ENCODE measurements at regions of chr17 and their contacts with region 1.

Region 1: DNA sequence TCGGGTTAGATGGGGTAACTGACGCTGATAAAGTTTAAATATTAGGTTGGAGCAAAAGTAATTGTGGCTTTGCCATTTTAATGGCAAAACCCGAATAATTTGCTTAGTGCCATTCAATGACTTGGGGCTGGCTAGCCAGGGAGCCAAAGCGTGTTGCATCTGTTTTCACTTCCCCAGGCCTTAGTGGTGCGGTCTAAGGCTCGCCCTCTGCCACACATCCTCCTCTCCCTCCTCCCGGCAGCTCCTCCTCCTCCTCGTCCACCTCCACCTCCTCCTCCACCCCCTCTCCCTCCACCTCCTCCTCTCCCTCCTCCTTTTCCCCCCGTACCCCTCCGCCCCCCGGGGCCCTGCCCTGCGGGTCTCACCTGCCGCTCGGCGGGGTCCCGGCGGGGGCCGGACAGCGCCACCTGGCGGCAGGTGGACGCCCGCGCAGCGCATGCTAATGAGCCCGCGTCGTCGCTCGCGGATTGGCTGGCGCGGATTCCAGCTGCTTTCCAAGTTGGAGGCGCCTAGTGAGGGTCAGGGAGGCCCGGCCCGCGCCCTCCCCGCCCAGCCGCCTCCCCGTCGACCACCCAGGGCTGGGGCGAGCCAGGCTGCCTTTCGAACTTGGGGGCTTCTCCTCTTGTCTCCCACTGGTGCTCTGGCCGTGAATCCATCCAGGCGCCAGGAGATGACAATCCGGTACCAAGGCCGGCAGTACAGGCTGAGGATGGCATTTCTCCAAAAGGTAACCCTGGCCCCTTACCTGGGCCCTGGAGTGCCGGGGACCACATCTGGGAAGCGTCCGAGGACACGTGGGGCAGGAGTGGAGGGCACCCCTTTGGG is 36.6 kb upstream of the RGS9 start:
- DNase-seq: peak; percentile 80 to 83
- ATAC-seq: peak; percentile 89 to 95
- H3K4me3 ChIP-seq: peak overlapping the region; percentile 55
- H3K27ac ChIP-seq: peak overlapping the region; percentile 75 to 87
- H3K4me1 ChIP-seq: peaks cover 25% of the 10 kb centered on the region
- CTCF ChIP-seq: peak; percentile 98
- EP300 ChIP-seq: no peak
- POLR2A ChIP-seq: peak; percentile 46
- RAD21 ChIP-seq: peak; percentile 69 to 95

Region 2: GRCh38 chr17:64938925-64939474 is 161.5 kb before region 1 on chr17:
- CTCF ChIA-PET with region 1: interaction called, 25 read pairs
- POLR2A ChIA-PET with region 1: no interaction called
- DNase-seq: peak; percentile 54 to 66
- ATAC-seq: peak; percentile 84 to 95
- H3K4me3 ChIP-seq: no peak overlapping the region
- H3K27ac ChIP-seq: 0 out of 6 replicates have a peak overlapping the region, but pooled peaks of 1 of the 2 experiments have one; percentile 9
- H3K4me1 ChIP-seq: peaks cover 13% of the 10 kb centered on the region
- CTCF ChIP-seq: peak; percentile 62
- EP300 ChIP-seq: no peak
- POLR2A ChIP-seq: no peak
- RAD21 ChIP-seq: peak; percentile 68 to 75

Region 3: GRCh38 chr17:64984851-64985521 is 115.5 kb before region 1 on chr17:
- CTCF ChIA-PET with region 1: interaction called, 17 read pairs
- POLR2A ChIA-PET with region 1: no interaction called
- DNase-seq: peak in 1 of 2 experiments; percentile 75
- ATAC-seq: peak; percentile 57 to 65
- H3K4me3 ChIP-seq: no peak overlapping the region
- H3K27ac ChIP-seq: peak overlapping the region; percentile 69 to 72
- H3K4me1 ChIP-seq: peaks cover 48% of the 10 kb centered on the region
- CTCF ChIP-seq: no peak
- EP300 ChIP-seq: peak; percentile 26 to 28; a peak in 1 of 5 replicates
- POLR2A ChIP-seq: no peak
- RAD21 ChIP-seq: no peak

Region 4: GRCh38 chr17:65027305-65027704 is 73.2 kb before region 1 on chr17:
- CTCF ChIA-PET with region 1: interaction called, 11 read pairs
- POLR2A ChIA-PET with region 1: interaction called, 5 read pairs
- DNase-seq: peak; percentile 74 to 83
- ATAC-seq: peak; percentile 84 to 88
- H3K4me3 ChIP-seq: no peak overlapping the region
- H3K27ac ChIP-seq: peak overlapping the region; percentile 22 to 54; a peak in 2 of 6 replicates
- H3K4me1 ChIP-seq: peaks cover 49% of the 10 kb centered on the region
- CTCF ChIP-seq: peak; percentile 34
- EP300 ChIP-seq: no peak
- POLR2A ChIP-seq: no peak
- RAD21 ChIP-seq: peak in 1 of 2 experiments; percentile 37; a peak in 3 of 5 replicates

Region 5: DNA sequence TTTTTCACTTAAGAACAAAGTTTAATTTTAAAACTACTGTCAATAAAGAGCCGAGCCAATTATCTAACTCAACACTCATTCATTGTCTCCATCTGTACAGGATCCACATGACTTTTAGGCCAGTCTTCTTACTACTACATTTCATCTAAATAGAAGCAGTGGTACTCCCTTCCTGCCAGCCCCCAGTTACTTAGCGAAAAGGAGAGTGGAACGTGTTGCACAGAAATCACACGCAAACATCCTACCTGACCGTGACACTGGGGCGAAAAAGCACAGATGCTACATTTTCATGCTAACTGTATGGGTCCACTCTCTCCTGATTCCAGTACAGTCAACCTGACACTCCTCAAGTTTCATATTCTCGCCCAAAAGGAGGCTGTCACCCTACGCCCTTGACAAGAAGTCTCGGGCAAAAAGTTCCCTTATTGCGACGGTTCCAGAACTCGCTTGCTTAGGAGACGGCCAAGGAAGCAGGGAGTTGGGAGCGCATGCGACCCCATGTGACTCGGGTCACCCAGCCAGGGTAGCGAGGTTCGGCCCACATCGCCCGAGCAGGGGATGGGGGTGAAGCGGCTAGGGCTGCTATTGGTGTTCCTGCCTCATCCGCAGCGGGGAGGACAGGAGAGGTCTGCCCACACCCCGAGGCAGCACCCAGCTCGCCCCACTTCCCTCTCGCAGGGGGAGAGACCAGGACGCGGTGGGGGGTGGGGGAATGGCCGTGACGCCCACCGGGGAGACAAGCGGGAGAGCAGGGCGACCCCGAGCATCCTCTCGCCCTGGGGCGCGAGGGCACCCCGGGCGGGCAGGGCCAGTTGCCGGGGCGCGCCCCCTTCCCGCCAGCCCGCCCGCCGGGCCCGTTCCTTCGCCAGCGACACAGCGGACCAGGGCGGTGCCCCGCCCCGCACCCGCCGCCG is 44.9 kb before region 1 on chr17:
- CTCF ChIA-PET with region 1: interaction called, 44 read pairs
- POLR2A ChIA-PET with region 1: interaction called, 27 read pairs
- DNase-seq: peak; percentile 65 to 73
- ATAC-seq: peak; percentile 76 to 78
- H3K4me3 ChIP-seq: peak overlapping the region; percentile 82
- H3K27ac ChIP-seq: peak overlapping the region; percentile 92 to 97
- H3K4me1 ChIP-seq: peaks cover 23% of the 10 kb centered on the region
- CTCF ChIP-seq: no peak
- EP300 ChIP-seq: no peak
- POLR2A ChIP-seq: peak; percentile 39
- RAD21 ChIP-seq: no peak; a peak in 1 of 5 replicates

Region 6: GRCh38 chr17:65085397-65085796 is 15.1 kb before region 1 on chr17:
- CTCF ChIA-PET with region 1: interaction called, 145 read pairs
- POLR2A ChIA-PET with region 1: interaction called, 4 read pairs
- DNase-seq: peak in 1 of 2 experiments; percentile 41
- ATAC-seq: peak in 1 of 2 experiments; percentile 62; a peak in 3 of 6 replicates
- H3K4me3 ChIP-seq: no peak overlapping the region
- H3K27ac ChIP-seq: no peak overlapping the region
- H3K4me1 ChIP-seq: peaks cover 13% of the 10 kb centered on the region; the same call in 1 of the 3 replicates
- CTCF ChIP-seq: no peak
- EP300 ChIP-seq: no peak
- POLR2A ChIP-seq: no peak
- RAD21 ChIP-seq: no peak

Region 7: DNA sequence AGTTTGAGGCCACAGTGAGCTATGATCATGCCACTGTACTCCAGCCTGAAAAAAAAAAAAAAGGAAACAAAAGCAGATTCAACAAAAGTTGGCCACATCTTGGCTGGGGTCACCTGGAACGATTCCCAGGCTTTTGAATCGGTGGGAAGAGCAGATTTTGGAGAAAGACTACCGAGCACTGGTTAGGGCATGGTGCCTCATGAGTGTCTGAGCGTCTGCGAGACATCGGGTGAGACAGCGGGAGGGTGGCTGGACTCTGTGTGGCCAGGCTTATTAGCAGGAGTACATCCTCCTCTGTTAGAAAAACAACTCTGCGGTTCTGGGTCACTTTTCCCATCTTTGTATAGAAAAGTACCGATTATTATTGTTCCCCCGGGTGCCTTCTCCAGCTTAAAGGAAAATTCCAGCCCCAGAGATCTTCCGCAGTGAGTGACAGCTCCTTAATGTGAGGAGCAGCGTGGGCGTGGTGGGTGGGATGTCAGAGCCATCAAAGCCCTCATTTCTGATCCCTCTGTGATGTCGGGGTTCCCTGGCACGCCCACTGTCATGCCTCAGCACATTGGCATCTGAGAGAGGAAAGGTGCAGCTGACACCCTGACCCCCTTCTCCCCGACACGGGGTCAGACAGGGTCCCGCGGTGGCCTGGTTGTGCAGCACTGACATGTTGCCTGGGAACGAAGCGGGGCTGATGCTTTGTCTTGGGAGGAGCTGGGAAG is 43.5 kb after region 1 on chr17:
- CTCF ChIA-PET with region 1: interaction called, 15 read pairs
- POLR2A ChIA-PET with region 1: no interaction called
- DNase-seq: no peak
- ATAC-seq: 0 out of 6 replicates have a peak, but pooled peaks have one; percentile 20 to 22
- H3K4me3 ChIP-seq: no peak overlapping the region
- H3K27ac ChIP-seq: no peak overlapping the region
- H3K4me1 ChIP-seq: no peaks in the 10 kb centered on the region
- CTCF ChIP-seq: no peak
- EP300 ChIP-seq: no peak
- POLR2A ChIP-seq: no peak
- RAD21 ChIP-seq: no peak

Region 8: GRCh38 chr17:65205655-65206054 is 105.1 kb after region 1 on chr17:
- CTCF ChIA-PET with region 1: no interaction called
- POLR2A ChIA-PET with region 1: no interaction called
- DNase-seq: no peak
- ATAC-seq: no peak
- H3K4me3 ChIP-seq: no peak overlapping the region
- H3K27ac ChIP-seq: no peak overlapping the region
- H3K4me1 ChIP-seq: no peaks in the 10 kb centered on the region
- CTCF ChIP-seq: no peak
- EP300 ChIP-seq: no peak
- POLR2A ChIP-seq: no peak
- RAD21 ChIP-seq: no peak

Measured in A549 (cell line).